Ovary (tissue), 10 donors: ENCODE measurements at regions of chr3 and their contacts with region 1.

Region 1: DNA sequence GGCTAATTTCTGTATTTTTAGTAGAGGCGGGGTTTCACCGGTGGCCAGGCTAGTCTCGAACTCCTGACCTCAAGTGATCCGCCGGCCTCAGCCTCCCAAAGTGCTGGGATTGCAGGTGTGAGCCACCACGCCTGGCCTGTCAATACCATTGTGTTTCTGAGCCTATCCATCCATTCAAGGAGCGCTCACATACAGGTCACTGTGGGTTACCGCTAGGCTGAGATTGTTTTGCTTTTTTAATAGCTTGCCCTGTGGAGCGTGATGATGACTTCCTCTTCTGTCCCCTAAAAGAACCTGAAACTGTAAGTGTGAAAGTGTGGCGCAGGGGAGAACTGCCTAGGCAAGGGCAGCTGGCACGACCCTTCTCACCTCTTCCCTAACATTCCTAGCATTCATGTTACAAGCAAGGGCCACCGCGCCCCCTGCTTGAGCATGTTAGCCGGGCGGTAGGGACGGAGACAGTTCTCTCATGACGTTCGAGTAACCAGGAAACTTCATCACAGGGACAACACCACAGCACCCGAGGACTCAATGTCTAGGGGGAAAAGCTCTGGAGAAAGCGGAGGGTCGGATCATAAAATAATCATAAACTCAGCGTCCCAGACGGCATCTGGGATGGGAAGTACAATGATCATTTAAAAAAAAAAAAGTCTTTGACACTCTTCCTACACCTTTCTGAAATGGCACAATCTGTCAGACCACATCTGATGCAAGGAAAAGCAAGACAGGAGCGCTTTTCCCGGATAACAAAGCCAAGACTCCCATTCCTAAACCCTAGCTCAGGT is 790 bp downstream of the LAMP3 start:
- DNase-seq: no peak
- H3K4me3 ChIP-seq: peak overlapping the region; percentile 27
- H3K27ac ChIP-seq: no peak overlapping the region
- H3K4me1 ChIP-seq: peaks cover 3% of the 10 kb centered on the region
- H3K27me3 ChIP-seq: no peaks in the 10 kb centered on the region
- CTCF ChIP-seq: no peak
- EP300 ChIP-seq: no peak
- POLR2A ChIP-seq: no peak

Region 2: GRCh38 chr3:182501856-182502255 is 659.9 kb before region 1 on chr3:
- intact Hi-C with region 1: no loop called
- DNase-seq: no peak
- H3K4me3 ChIP-seq: no peak overlapping the region
- H3K27ac ChIP-seq: no peak overlapping the region
- H3K4me1 ChIP-seq: no peaks in the 10 kb centered on the region
- H3K27me3 ChIP-seq: no peaks in the 10 kb centered on the region
- CTCF ChIP-seq: no peak
- EP300 ChIP-seq: no peak
- POLR2A ChIP-seq: no peak

Region 3: GRCh38 chr3:183131735-183132134 is 30.0 kb before region 1 on chr3:
- intact Hi-C with region 1: no loop called
- DNase-seq: no peak
- H3K4me3 ChIP-seq: no peak overlapping the region
- H3K27ac ChIP-seq: no peak overlapping the region
- H3K4me1 ChIP-seq: no peaks in the 10 kb centered on the region
- H3K27me3 ChIP-seq: no peaks in the 10 kb centered on the region
- CTCF ChIP-seq: no peak
- EP300 ChIP-seq: no peak
- POLR2A ChIP-seq: no peak

Region 4: GRCh38 chr3:183328823-183329222 is 167.1 kb after region 1 on chr3:
- intact Hi-C with region 1: loop called in 1 of 4 experiments (anchors 5 kb)
- DNase-seq: no peak
- H3K4me3 ChIP-seq: no peak overlapping the region
- H3K27ac ChIP-seq: no peak overlapping the region
- H3K4me1 ChIP-seq: no peaks in the 10 kb centered on the region
- H3K27me3 ChIP-seq: no peaks in the 10 kb centered on the region
- CTCF ChIP-seq: no peak
- EP300 ChIP-seq: no peak
- POLR2A ChIP-seq: no peak